ENCODE measurements at regions of chr11 and their contacts with region 1.

Region 1: DNA sequence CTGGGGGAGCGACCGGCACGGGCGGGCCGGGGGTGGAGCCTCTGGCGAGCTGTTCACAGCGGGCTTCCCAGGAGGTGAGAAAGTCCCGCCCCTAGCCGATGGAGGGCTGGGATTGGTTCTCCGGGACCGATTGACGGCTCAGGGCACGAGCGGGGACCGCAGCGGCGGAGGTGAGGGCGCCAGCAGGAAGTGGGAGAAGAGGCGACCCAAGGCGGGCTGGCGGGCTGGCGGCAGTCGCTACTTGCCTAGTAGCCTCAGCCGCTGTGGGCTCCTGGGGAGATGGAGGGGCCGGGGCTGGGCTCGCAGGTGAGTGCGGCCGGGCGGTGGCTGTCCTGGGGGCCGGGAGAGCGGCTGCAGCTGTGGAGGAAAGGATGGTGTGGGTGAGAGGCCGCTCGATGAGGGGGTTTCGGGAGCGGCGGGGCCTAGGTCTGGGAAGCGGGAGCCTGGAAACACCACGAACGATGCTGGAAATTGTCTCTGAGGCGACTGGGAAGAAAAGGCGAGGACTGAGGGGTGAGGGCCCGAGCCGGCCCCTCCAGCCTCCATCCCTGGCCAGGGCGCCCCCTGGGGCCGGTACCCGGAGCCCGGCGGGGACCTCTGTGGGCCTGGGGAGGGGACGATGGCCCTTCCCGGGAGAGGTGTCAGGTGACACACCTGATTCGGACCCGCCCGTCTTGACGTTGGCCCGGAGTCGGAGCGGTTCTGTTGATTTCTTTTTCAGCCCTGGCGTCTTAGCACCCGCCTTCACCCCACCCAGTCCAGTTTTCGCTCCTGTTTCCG is at the start of gene ZDHHC13:
- DNase-seq: peak; percentile 96
- H3K4me3 ChIP-seq: peak within 1 kb of the TSS; percentile 74 to 92 (median 83)
- H3K27ac ChIP-seq: peak within 1 kb of the TSS; percentile 45
- H3K4me1 ChIP-seq: peaks cover 44% of the 10 kb centered on the region
- H3K27me3 ChIP-seq: no peaks in the 10 kb centered on the region
- CTCF ChIP-seq: peak; percentile 51 to 74
- POLR2A ChIP-seq: peak; percentile 78
- total RNA-seq, gene ZDHHC13: 50.1 and 52.9 TPM in 2 replicates

Region 2: DNA sequence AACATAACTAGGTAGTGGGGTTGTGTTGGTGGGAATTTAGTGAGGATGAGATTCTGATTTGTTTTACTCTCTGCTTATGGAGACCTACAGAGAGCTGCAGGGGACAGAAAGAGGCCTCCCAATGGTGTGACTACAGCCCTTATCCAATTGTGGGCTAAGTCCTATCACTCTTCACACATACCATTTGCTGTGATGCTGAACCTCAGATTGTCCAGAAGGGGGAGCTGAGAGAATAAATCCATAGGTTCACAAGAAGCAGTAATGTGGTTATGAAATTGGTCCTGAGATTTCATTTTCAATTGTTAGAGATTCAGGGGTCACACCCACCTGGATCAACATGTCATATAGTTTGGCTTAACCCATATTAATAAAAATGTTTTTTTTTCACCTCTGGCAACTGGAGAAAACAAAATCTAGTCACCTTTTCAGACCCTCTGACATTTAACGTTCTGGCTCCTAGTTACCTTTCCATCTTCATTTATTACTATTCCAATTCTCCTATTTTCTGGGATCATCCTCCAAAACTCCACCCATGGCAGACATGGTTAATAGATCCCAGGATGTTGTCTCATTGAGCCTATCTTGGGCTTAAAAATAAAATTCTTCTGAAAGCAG is 272.3 kb before region 1 on chr11:
- CTCF ChIA-PET with region 1: no interaction called
- POLR2A ChIA-PET with region 1: no interaction called
- dilution Hi-C with region 1: no loop called
- intact Hi-C with region 1: no loop called
- DNase-seq: peak; percentile 29
- H3K4me3 ChIP-seq: no peak overlapping the region
- H3K27ac ChIP-seq: no peak overlapping the region
- H3K4me1 ChIP-seq: no peaks in the 10 kb centered on the region
- H3K27me3 ChIP-seq: peaks cover 6 to 11% of the 10 kb centered on the region in 2 experiments
- CTCF ChIP-seq: peak; percentile 51 to 61
- POLR2A ChIP-seq: no peak

Region 3: GRCh38 chr11:18956630-18957029 is 160.5 kb before region 1 on chr11:
- CTCF ChIA-PET with region 1: no interaction called
- POLR2A ChIA-PET with region 1: no interaction called
- dilution Hi-C with region 1: no loop called
- intact Hi-C with region 1: no loop called
- DNase-seq: no peak
- H3K4me3 ChIP-seq: no peak overlapping the region
- H3K27ac ChIP-seq: no peak overlapping the region
- H3K4me1 ChIP-seq: no peaks in the 10 kb centered on the region
- H3K27me3 ChIP-seq: peaks cover 0 to 4% of the 10 kb centered on the region in 2 experiments
- CTCF ChIP-seq: no peak
- POLR2A ChIP-seq: no peak

Region 4: DNA sequence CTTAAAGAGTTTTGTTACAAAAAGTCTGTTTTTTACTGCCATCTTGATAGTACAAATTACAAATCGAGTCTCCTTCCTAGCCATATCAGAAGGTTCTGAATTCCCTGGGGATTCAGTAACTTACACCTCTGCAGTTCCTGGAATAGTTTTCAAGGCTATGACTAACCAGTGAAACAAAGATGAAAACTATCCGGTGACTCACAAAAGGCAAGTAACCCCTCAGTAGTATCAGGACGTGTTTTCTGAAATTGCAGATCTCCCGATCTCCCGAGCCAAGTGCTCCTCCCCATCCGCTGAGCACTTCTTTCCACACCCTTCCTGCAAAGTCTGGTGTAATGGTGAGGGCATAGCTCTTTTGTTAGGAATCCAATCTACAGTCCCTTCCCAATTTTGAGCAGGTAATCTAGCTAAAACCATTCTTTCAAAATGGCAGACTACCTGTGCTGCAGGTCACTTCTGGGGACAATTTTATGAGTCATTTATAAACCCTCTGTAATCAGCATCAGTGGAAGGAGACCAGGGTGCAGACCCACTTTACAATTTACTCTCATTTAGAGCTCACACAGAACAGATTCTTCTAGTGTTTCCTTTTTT is 115.8 kb after region 1 on chr11:
- CTCF ChIA-PET with region 1: no interaction called
- POLR2A ChIA-PET with region 1: interaction called, 3 read pairs
- dilution Hi-C with region 1: no loop called
- intact Hi-C with region 1: loop called (anchors 2 kb)
- DNase-seq: peak; percentile 90
- H3K4me3 ChIP-seq: peak overlapping the region in 1 of 3 experiments; percentile 42
- H3K27ac ChIP-seq: peak overlapping the region; percentile 73
- H3K4me1 ChIP-seq: peaks cover 15% of the 10 kb centered on the region
- H3K27me3 ChIP-seq: no peaks in the 10 kb centered on the region
- CTCF ChIP-seq: no peak
- POLR2A ChIP-seq: peak; percentile 70